Activated T-helper 2 cell treated with anti-CD3 and anti-CD28 coated beads, Interferon-gamma antibody, Interleukin-2, Interleukin-4, amounts not matched to agents 10 μg/mL and 5 μg/mL and 100 μg/mL, durations not matched to agents 14 hours and 24 hours and 36 hours (primary cell): ENCODE measurements at regions of chr7 and their contacts with region 1.

Region 1: GRCh38 chr7:157490457-157490912 is 153.7 kb downstream of the DNAJB6 start:
- DNase-seq: peak; percentile 65
- H3K4me3 Mint-ChIP-seq: no peak overlapping the region
- H3K27ac Mint-ChIP-seq: peak overlapping the region; percentile 47
- H3K4me1 Mint-ChIP-seq: peaks cover 34% of the 10 kb centered on the region
- H3K27me3 Mint-ChIP-seq: peaks cover 27% of the 10 kb centered on the region

Region 2: DNA sequence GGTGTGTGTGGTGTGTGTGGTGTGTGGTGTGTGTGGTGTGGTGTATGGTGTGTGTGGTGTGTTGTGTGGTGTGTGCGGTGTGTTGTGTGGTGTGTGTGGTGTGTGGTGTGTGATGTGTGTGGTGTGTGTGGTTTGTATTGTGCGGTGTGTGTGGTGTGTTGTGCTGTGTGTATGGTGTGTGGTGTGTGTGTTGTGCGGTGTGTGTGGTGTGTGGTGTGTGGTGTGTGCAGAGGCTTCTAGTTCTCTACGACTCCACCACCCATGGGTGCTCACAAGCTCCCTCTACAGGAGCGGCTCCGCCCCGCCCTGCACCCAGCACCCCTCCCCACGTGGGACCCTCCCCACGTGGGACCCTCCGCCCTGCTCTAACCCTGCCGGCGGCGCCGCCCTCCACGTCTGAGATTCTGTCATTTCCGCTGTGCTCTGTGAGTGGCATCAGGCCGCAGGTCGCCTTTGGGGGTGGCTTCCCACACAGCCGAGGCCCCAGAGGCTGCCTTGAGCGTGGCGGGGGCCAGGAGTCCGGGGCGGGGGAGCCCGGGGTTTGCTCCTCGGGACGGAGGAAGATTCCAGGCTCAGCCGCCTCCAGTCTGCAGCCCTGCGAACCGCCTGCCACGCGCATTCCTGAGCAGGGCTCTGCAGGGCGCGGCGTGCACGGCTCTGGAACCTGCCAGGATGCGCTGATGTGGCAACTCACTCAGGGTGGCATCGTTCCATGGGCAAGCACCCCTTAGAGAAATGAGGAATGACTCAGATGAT is 190.7 kb before region 1 on chr7:
- intact Hi-C with region 1: loop called (anchors 10 kb)
- DNase-seq: no peak
- H3K4me3 Mint-ChIP-seq: no peak overlapping the region
- H3K27ac Mint-ChIP-seq: peak overlapping the region; percentile 38
- H3K4me1 Mint-ChIP-seq: peaks cover 32% of the 10 kb centered on the region
- H3K27me3 Mint-ChIP-seq: no peaks in the 10 kb centered on the region

Region 3: GRCh38 chr7:157412021-157412443 is 78.5 kb before region 1 on chr7:
- intact Hi-C with region 1: loop called (anchors 2 kb)
- DNase-seq: no peak
- H3K4me3 Mint-ChIP-seq: no peak overlapping the region
- H3K27ac Mint-ChIP-seq: peak overlapping the region; percentile 83
- H3K4me1 Mint-ChIP-seq: peaks cover 11% of the 10 kb centered on the region
- H3K27me3 Mint-ChIP-seq: no peaks in the 10 kb centered on the region

Region 4: GRCh38 chr7:157570531-157571200 is 80.2 kb after region 1 on chr7:
- intact Hi-C with region 1: loop called (anchors 1 kb)
- DNase-seq: no peak
- H3K4me3 Mint-ChIP-seq: peak overlapping the region; percentile 23
- H3K27ac Mint-ChIP-seq: peak overlapping the region; percentile 54
- H3K4me1 Mint-ChIP-seq: peaks cover 60% of the 10 kb centered on the region
- H3K27me3 Mint-ChIP-seq: no peaks in the 10 kb centered on the region

Region 5: GRCh38 chr7:157612664-157613561 is 122.4 kb after region 1 on chr7:
- intact Hi-C with region 1: loop called (anchors 5 kb)
- DNase-seq: peak; percentile 65
- H3K4me3 Mint-ChIP-seq: peak overlapping the region; percentile 81
- H3K27ac Mint-ChIP-seq: peak overlapping the region; percentile 50
- H3K4me1 Mint-ChIP-seq: peaks cover 5% of the 10 kb centered on the region
- H3K27me3 Mint-ChIP-seq: peaks cover 2% of the 10 kb centered on the region

Region 6: GRCh38 chr7:157690058-157690832 is 199.8 kb after region 1 on chr7:
- intact Hi-C with region 1: no loop called
- DNase-seq: no peak
- H3K4me3 Mint-ChIP-seq: peak overlapping the region; percentile 66
- H3K27ac Mint-ChIP-seq: no peak overlapping the region
- H3K4me1 Mint-ChIP-seq: peaks cover 7% of the 10 kb centered on the region
- H3K27me3 Mint-ChIP-seq: peaks cover 58% of the 10 kb centered on the region